ENCODE measurements at regions of chr2 and their contacts with region 1.

Region 1: GRCh38 chr2:61109291-61109690 is 43.6 kb downstream of the SANBR start:
- DNase-seq: no peak
- H3K4me3 ChIP-seq: no peak overlapping the region
- H3K27ac ChIP-seq: no peak overlapping the region
- H3K27me3 ChIP-seq: no peaks in the 10 kb centered on the region
- CTCF ChIP-seq: no peak

Region 2: DNA sequence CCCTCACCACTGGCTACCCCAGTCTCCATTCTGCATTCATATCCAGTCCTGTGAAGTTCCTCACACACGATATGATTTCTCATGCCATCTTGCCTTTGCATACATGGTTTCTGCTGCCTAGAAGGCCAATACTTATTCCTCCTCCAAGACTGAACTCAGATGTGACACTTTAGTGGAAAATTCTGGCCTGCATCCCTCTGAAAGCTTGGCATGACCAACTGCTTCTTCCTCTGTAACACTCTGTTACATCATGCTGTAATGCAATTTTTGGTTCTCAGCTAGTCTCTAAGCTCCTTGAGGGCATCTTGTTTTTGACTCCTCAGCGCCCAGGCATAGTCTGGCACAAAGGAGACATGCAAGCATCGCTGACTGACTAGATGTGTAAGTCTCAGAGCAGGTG is 732.0 kb after region 1 on chr2:
- intact Hi-C with region 1: loop called in 1 of 2 experiments (anchors 5 kb)
- DNase-seq: no peak
- H3K4me3 ChIP-seq: no peak overlapping the region
- H3K27ac ChIP-seq: no peak overlapping the region
- H3K27me3 ChIP-seq: no peaks in the 10 kb centered on the region
- CTCF ChIP-seq: no peak

Measured in dorsolateral prefrontal cortex (tissue), 120 donors.